ENCODE measurements at regions of chrX and their contacts with region 1.

Region 1: DNA sequence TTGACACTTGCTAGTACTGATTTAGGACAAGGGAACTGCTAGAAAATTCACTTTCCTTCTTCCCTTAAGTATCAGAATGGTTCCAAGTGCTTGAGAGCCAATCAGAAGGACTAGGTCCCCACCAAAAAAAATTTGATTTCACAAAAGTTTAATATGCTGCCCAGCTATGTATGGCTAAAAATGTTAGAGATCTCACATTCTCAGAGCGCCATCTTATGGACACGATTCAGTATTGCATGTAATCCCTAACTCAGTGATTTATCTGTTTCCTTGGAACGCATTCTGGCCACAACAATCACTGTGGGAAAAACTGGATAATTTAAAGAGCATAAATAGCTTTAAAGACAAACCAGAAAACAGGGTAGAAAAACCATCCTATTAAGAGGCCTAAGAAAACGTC is 255.1 kb upstream of the GPC4 start:
- H3K4me3 ChIP-seq: no peak overlapping the region
- H3K27ac ChIP-seq: no peak overlapping the region
- H3K4me1 ChIP-seq: no peaks in the 10 kb centered on the region
- CTCF ChIP-seq: peak; percentile 65

Region 2: DNA sequence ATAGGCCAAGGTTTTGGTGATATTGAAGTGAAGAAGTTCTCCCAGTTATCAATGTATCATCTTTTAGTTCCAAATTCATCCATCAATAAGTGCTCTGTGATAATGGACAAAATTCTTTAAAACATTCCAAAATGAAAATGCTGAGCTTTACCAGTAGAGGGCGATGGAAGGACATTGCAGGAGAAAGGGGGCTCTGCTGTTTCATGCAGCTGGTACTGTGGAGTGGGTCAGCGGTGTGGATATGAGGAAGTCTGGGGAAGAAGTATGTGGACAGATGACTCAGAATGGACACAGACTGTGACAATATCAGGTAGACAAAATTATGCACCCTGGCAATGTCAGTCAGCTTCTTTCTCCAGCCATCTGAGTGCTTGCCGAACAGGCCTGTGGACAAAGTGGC is 665.3 kb before region 1 on chrX:
- CTCF ChIA-PET with region 1: interaction called, 13 read pairs
- POLR2A ChIA-PET with region 1: no interaction called
- H3K4me3 ChIP-seq: no peak overlapping the region
- H3K27ac ChIP-seq: no peak overlapping the region
- H3K4me1 ChIP-seq: no peaks in the 10 kb centered on the region
- CTCF ChIP-seq: peak; percentile 63

Region 3: DNA sequence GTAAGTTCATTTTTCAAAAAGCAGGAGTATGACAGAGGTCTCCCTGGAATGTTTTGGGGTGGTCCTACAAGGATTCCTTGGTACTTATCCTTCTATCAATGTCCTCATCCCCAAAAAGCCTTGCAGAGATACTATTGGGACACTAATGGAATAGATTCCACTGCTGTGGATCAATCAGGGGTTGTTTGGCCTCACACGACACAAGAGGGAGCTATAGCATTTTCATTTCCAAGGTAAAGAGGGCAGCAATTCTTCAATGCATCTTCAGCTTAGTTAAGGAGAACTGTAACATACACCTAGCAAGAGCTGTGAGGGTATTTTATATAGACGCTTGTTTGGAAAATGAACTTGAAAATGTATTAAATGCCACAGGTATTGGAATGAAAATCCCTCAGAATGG is 624.4 kb before region 1 on chrX:
- CTCF ChIA-PET with region 1: interaction called, 12 read pairs
- POLR2A ChIA-PET with region 1: no interaction called
- H3K4me3 ChIP-seq: no peak overlapping the region
- H3K27ac ChIP-seq: no peak overlapping the region
- H3K4me1 ChIP-seq: no peaks in the 10 kb centered on the region
- CTCF ChIP-seq: no peak

Region 4: DNA sequence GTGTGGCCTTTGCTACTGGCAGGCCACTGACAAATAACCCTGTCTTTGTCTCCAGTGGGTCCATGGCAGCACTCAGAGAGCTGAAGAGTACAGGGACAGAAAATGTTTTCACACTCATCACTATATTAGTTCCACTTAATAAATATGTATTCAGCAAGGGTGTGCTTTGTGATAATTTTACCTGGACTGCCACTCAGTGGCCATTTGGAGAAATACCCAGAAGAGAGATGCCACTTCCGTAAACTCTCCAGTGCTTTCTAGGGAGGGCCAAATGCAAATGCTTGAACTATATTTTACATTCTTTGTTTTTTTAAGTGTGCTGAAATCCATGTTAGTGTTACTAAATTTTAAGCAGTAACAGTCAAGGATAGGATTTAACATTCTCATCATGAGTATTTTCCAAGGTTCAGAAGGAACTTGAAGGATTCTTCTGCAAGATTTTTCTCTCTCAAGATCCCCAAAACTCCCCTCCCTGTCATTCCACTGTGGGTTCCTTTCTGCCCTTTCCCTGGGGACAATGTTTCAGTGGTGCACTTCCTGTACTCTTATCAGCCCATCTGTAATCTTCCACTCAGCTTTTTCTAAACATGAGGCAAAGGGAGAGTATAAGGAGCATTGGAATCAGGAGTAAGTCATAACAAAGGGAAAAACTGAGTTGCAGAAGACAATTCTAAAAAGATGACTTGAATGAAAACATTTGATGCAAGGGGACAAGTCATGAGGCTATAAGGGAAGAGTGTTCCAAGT is 498.2 kb before region 1 on chrX:
- CTCF ChIA-PET with region 1: interaction called, 11 read pairs
- POLR2A ChIA-PET with region 1: no interaction called
- H3K4me3 ChIP-seq: no peak overlapping the region
- H3K27ac ChIP-seq: no peak overlapping the region
- H3K4me1 ChIP-seq: no peaks in the 10 kb centered on the region
- CTCF ChIP-seq: peak; percentile 47; the same call in 1 of the 2 replicates

Region 5: DNA sequence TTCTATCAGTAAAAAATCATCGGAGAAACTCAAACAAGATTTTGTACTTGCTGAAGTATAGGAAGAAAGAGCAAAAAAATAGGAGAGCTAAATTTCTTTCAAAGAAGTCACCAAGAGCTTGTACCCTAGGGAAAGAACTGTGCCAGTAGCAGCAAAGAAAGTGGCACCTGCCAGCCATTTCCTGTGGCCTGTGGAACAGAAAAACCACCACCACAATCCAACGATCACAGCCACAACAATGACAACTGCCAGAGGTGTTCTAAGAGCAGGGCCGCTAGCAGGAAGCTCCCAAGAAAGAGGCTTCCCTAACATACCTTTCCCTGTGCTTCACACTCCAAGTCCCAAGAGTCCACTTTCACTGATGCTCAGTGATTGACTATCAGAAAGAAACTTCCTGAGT is 11.0 kb after region 1 on chrX:
- CTCF ChIA-PET with region 1: interaction called, 27 read pairs
- POLR2A ChIA-PET with region 1: no interaction called
- H3K4me3 ChIP-seq: no peak overlapping the region
- H3K27ac ChIP-seq: no peak overlapping the region
- H3K4me1 ChIP-seq: 0 out of 2 replicates have a peak, but pooled peaks cover 3% of the 10 kb centered on the region
- CTCF ChIP-seq: no peak

Measured in HEK293 (cell line).